A549 (cell line): ENCODE measurements at regions of chr15 and their contacts with region 1.

Region 1: DNA sequence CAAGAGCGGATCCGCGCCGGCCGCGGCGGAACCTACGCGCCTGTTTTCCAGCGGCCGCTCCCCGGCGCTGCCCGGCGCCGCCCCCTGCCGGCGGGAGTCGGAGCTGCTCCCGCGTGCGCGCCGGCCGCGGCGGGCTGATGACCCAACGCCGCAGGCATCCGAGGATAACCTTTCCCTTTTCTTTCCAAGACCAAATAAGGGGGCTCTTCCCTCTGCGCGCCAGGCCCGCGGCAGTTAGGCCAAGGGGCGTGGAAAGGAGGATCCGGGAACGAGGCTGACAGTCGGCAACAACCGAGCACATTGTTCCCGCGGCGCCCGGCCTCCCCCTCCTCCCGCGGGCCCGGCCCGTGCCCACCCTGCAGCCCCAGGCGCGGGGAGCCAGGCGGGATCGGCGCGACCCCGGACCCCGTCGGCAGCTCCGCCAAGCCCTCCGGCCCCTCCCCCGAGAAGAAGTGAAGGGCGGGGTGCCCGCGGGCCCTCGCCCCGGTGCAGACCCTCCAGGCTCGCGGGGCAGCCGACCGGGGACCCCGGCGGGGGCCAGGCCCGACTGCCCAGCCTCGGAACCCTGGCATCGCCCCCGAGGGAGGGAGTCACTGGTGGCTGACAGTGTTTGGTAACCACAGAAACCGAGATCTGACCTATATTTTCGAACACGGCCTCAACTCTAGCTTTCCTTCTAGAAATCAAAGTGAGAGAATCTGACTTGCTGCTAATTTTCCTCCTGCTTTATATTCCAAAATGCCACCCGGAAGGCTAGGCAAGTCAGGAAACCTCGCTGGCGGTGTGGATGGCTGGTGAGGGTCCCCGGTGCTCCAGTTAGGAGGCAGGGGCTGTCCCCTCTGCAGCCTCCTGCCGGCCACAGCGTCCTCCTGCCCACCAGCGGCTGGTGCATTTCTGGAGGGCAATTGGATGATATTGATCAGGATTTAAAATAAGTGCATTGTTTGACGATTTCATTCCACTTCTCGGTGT is 45.6 kb upstream of the SYNM start:
- DNase-seq: peak; percentile 78 to 84
- ATAC-seq: peak; percentile 80 to 86
- H3K4me3 ChIP-seq: peak overlapping the region; percentile 51
- H3K27ac ChIP-seq: peak overlapping the region; percentile 87 to 95
- H3K4me1 ChIP-seq: peaks cover 14% of the 10 kb centered on the region; the same call in 2 of the 3 replicates
- CTCF ChIP-seq: peak; percentile 85
- EP300 ChIP-seq: peak in 1 of 2 experiments; percentile 47; a peak in 1 of 5 replicates
- POLR2A ChIP-seq: peak; percentile 30
- RAD21 ChIP-seq: peak; percentile 72 to 95

Region 2: GRCh38 chr15:98914626-98915025 is 144.7 kb before region 1 on chr15:
- CTCF ChIA-PET with region 1: interaction called, 17 read pairs
- POLR2A ChIA-PET with region 1: no interaction called
- DNase-seq: peak in 1 of 2 experiments; percentile 38
- ATAC-seq: peak in 1 of 2 experiments; percentile 12; a peak in 2 of 6 replicates
- H3K4me3 ChIP-seq: no peak overlapping the region
- H3K27ac ChIP-seq: peak overlapping the region in 1 of 2 experiments; percentile 47; a peak in 2 of 6 replicates
- H3K4me1 ChIP-seq: peaks cover 19% of the 10 kb centered on the region
- CTCF ChIP-seq: no peak
- EP300 ChIP-seq: no peak
- POLR2A ChIP-seq: no peak
- RAD21 ChIP-seq: no peak

Region 3: GRCh38 chr15:98983333-98983732 is 76.0 kb before region 1 on chr15:
- CTCF ChIA-PET with region 1: interaction called, 13 read pairs
- POLR2A ChIA-PET with region 1: interaction called, 3 read pairs
- DNase-seq: peak; percentile 85 to 87
- ATAC-seq: peak; percentile 68 to 79
- H3K4me3 ChIP-seq: no peak overlapping the region
- H3K27ac ChIP-seq: peak overlapping the region; percentile 60 to 68
- H3K4me1 ChIP-seq: peaks cover 26% of the 10 kb centered on the region
- CTCF ChIP-seq: no peak
- EP300 ChIP-seq: peak; percentile 12 to 31; a peak in 1 of 5 replicates
- POLR2A ChIP-seq: no peak
- RAD21 ChIP-seq: 0 out of 5 replicates have a peak, but pooled peaks of 1 of the 2 experiments have one; percentile 17

Region 4: DNA sequence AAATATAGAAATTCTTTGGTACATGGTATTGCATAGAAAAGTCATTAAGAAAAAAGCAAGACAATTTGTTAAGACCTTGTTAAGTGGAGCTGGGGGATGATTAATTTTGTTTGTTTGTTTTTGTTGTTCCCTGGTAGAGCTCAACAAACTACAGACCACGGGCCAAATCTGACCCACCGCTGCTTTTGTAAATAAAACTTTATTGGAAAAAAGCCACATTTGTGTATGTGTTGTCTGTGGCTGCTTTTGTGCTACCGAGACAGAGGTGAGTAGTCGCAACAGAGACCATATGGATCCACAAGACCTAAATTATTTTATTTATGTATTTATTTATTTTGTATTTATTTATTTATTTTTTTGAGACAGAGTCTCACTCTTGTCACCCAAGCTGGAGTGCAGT is 28.5 kb before region 1 on chr15:
- CTCF ChIA-PET with region 1: interaction called, 11 read pairs
- POLR2A ChIA-PET with region 1: no interaction called
- DNase-seq: no peak
- ATAC-seq: no peak
- H3K4me3 ChIP-seq: no peak overlapping the region
- H3K27ac ChIP-seq: no peak overlapping the region
- H3K4me1 ChIP-seq: peaks cover 5% of the 10 kb centered on the region; the same call in 1 of the 3 replicates
- CTCF ChIP-seq: no peak
- EP300 ChIP-seq: no peak
- POLR2A ChIP-seq: no peak
- RAD21 ChIP-seq: no peak

Region 5: DNA sequence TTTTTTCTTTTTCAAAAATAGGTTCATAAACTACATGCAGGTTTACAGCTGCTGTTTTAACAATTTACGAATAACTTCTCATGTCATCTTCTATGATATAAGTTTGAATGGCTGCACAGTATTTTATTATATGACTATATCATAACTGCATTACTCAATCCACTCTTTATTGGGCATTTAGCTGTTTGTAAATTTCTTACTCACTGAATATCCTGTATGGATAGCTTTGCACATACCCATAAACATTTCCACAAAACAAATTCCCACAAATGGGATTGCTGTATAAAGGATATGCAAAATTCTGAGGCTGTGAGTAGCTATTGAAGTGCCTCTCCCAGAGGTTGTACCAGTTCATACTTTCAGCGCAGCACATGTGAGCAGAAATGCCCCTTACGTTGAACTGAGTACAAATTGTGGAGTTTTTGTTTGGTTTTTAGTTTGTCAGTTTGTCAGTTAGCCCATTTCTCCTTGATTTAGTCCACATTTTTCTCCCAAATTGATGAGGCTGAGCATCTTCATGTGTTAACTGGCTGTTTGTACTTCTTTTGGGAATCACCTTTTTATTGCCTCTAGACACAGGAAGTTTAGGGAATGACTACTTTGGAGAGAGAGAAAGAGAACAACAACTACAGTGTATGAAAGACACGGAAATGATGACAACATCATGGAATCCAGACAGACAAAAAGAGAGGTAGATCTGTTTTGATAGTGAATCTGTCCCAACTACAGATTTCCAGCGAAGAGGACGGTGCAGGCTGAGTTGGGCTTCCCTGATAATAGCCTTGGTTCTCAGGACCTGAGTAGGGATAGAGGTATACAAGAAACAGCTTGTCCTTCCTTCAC is 165.3 kb after region 1 on chr15:
- CTCF ChIA-PET with region 1: no interaction called
- POLR2A ChIA-PET with region 1: no interaction called
- DNase-seq: no peak
- ATAC-seq: no peak
- H3K4me3 ChIP-seq: no peak overlapping the region
- H3K27ac ChIP-seq: no peak overlapping the region
- H3K4me1 ChIP-seq: no peaks in the 10 kb centered on the region
- CTCF ChIP-seq: no peak
- EP300 ChIP-seq: no peak
- POLR2A ChIP-seq: no peak
- RAD21 ChIP-seq: no peak